ENCODE measurements at regions of chr19 and their contacts with region 1.

Region 1: DNA sequence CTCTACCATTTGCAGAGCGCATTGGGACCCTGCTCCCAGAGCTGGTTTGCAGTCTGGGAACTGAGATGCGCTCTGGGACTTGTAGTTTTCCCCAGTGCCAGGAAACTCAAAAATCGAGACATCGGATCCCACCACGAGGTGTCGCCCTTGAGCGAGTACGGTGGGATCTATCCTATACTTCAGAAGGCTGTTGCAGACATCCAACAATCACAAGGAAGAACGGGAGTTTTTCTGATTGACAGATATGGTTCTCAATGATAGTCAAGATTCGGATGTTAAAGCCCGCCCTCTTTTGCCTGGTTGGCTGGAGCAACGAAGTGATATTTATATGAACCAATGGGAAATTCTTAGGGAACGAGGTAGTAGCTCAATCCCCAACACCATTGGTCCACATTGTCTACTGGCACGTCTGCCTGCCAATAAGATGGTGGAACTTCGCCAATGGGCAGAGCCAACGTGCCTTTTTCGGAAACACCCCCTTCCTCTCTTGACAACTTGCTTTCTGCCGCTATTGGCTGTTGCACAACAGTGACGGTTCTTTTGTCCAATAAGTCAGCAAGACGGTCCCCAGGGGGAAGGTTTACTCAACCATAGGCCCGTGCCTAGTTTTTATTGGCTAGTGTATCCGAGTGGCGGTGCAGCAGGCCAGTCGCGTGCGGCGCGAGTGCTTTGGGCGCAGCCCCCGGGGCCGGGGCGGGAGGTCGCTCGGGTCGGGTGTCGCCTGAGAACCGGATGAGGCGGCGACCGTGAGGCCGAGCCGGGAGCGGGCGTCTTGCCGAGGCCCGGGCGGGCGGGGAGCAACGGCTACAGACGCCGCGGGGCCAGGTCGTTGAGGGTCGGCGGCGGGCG is at the start of gene DNM2:
- H3K4me3 Mint-ChIP-seq: peak within 1 kb of the TSS; percentile 96
- H3K27ac Mint-ChIP-seq: peak within 1 kb of the TSS; percentile 91
- H3K4me1 Mint-ChIP-seq: peaks cover 41% of the 10 kb centered on the region
- H3K27me3 Mint-ChIP-seq: no peaks in the 10 kb centered on the region

Region 2: GRCh38 chr19:10612491-10613119 is 105.0 kb before region 1 on chr19:
- intact Hi-C with region 1: no loop called
- H3K4me3 Mint-ChIP-seq: no peak overlapping the region
- H3K27ac Mint-ChIP-seq: no peak overlapping the region
- H3K4me1 Mint-ChIP-seq: peaks cover 11% of the 10 kb centered on the region
- H3K27me3 Mint-ChIP-seq: no peaks in the 10 kb centered on the region

Region 3: GRCh38 chr19:10751109-10751953 is 33.8 kb after region 1 on chr19:
- intact Hi-C with region 1: loop called (anchors 5 kb)
- H3K4me3 Mint-ChIP-seq: peak overlapping the region; percentile 39
- H3K27ac Mint-ChIP-seq: peak overlapping the region; percentile 84
- H3K4me1 Mint-ChIP-seq: peaks cover 90% of the 10 kb centered on the region
- H3K27me3 Mint-ChIP-seq: no peaks in the 10 kb centered on the region

Region 4: DNA sequence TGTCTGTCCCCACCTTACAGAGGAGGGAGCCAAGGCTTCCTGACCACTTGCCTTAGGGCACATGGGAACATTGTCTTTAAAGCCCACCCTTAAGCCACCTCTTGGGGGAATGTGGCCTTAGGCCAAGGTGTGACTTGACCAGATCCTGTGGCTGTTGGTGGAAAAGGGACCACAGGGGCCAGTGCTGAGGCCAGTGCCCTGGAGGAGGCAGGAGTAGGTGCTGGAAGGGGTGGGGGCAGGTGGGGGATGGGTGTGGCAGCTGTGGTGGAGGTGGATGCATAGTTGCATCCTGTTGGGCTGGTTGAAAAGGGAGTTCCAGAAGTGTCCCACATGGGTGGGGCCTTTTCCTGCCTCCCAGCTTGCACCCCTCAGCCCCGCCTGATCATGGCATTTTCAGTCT is 45.1 kb after region 1 on chr19:
- intact Hi-C with region 1: no loop called
- H3K4me3 Mint-ChIP-seq: no peak overlapping the region
- H3K27ac Mint-ChIP-seq: peak overlapping the region; percentile 45
- H3K4me1 Mint-ChIP-seq: peaks cover 82% of the 10 kb centered on the region
- H3K27me3 Mint-ChIP-seq: no peaks in the 10 kb centered on the region

Region 5: GRCh38 chr19:10812902-10813404 is 95.4 kb after region 1 on chr19:
- intact Hi-C with region 1: no loop called
- H3K4me3 Mint-ChIP-seq: no peak overlapping the region
- H3K27ac Mint-ChIP-seq: peak overlapping the region; percentile 93
- H3K4me1 Mint-ChIP-seq: peaks cover 77% of the 10 kb centered on the region
- H3K27me3 Mint-ChIP-seq: no peaks in the 10 kb centered on the region

Region 6: GRCh38 chr19:10835754-10836477 is 118.3 kb after region 1 on chr19 and contains the start of gene TMED1:
- intact Hi-C with region 1: loop called (anchors 10 kb)
- H3K4me3 Mint-ChIP-seq: peak within 1 kb of the TSS; percentile 97
- H3K27ac Mint-ChIP-seq: peak within 1 kb of the TSS; percentile 100
- H3K4me1 Mint-ChIP-seq: peaks cover 31% of the 10 kb centered on the region
- H3K27me3 Mint-ChIP-seq: no peaks in the 10 kb centered on the region

Region 7: GRCh38 chr19:10864538-10864899 is 146.9 kb after region 1 on chr19:
- intact Hi-C with region 1: loop called (anchors 1 kb)
- H3K4me3 Mint-ChIP-seq: no peak overlapping the region
- H3K27ac Mint-ChIP-seq: peak overlapping the region; percentile 36
- H3K4me1 Mint-ChIP-seq: peaks cover 64% of the 10 kb centered on the region
- H3K27me3 Mint-ChIP-seq: no peaks in the 10 kb centered on the region

Region 8: GRCh38 chr19:11073568-11073967 is 356.0 kb after region 1 on chr19:
- intact Hi-C with region 1: no loop called
- H3K4me3 Mint-ChIP-seq: no peak overlapping the region
- H3K27ac Mint-ChIP-seq: peak overlapping the region; percentile 60
- H3K4me1 Mint-ChIP-seq: peaks cover 48% of the 10 kb centered on the region
- H3K27me3 Mint-ChIP-seq: peaks cover 30% of the 10 kb centered on the region